Heart right ventricle (tissue), 16 donors: ENCODE measurements at regions of chr6 and their contacts with region 1.

Region 1: GRCh38 chr6:121771937-121772720 is 336.7 kb downstream of the GJA1 start:
- DNase-seq: no peak
- ATAC-seq: peak in 2 of 8 donors; percentile 41 to 63
- H3K4me3 ChIP-seq: no peak overlapping the region
- H3K27ac ChIP-seq: peak overlapping the region in 3 of 10 donors; percentile 36 to 73 (median 63)
- H3K4me1 ChIP-seq: peaks cover 0 to 32% (median 4%) of the 10 kb centered on the region in 9 donors
- H3K27me3 ChIP-seq: no peaks in the 10 kb centered on the region
- CTCF ChIP-seq: no peak

Region 2: GRCh38 chr6:121436960-121437850 is 334.9 kb before region 1 on chr6:
- intact Hi-C with region 1: loop called in 1 of 10 experiments (anchors 5 kb)
- DNase-seq: peak; percentile 50 to 53
- ATAC-seq: peak; percentile 56 to 72 (median 64)
- H3K4me3 ChIP-seq: peak overlapping the region; percentile 54 to 82 (median 72)
- H3K27ac ChIP-seq: peak overlapping the region; percentile 83 to 96 (median 90)
- H3K4me1 ChIP-seq: peaks cover 0 to 41% (median 18%) of the 10 kb centered on the region in 9 donors
- H3K27me3 ChIP-seq: peaks cover 0 to 35% (median 0%) of the 10 kb centered on the region in 7 donors
- CTCF ChIP-seq: no peak

Region 3: DNA sequence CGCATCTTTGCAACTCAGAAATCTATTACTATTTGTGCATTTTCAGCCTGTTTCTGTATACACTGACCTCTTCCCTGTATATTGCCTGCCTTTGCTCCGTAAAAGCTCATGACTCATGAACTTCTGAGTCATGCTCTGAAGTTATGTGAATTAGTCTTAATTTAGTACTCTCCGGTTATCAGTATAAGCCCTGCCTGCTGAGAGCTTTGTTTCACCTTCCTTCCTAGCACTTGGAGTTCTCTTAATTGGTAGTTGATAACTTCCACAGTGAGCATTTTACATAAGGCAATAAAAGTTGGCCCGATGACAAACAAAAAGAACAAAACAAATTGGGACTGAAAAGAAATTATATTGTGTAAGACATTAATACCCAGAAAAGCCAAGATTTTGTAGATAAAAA is 105.3 kb before region 1 on chr6:
- intact Hi-C with region 1: loop called in 1 of 10 experiments (anchors 10 kb)
- DNase-seq: peak in 1 of 2 donors; percentile 21
- ATAC-seq: peak; percentile 77 to 98 (median 94)
- H3K4me3 ChIP-seq: no peak overlapping the region
- H3K27ac ChIP-seq: peak overlapping the region in 8 of 10 donors; percentile 41 to 77 (median 58)
- H3K4me1 ChIP-seq: peaks cover 0 to 20% (median 12%) of the 10 kb centered on the region in 9 donors
- H3K27me3 ChIP-seq: no peaks in the 10 kb centered on the region
- CTCF ChIP-seq: no peak

Region 4: GRCh38 chr6:121697921-121698320 is 74.2 kb before region 1 on chr6:
- intact Hi-C with region 1: no loop called
- DNase-seq: no peak
- ATAC-seq: no peak
- H3K4me3 ChIP-seq: no peak overlapping the region
- H3K27ac ChIP-seq: no peak overlapping the region
- H3K4me1 ChIP-seq: peaks cover 0 to 11% (median 0%) of the 10 kb centered on the region in 9 donors
- H3K27me3 ChIP-seq: no peaks in the 10 kb centered on the region
- CTCF ChIP-seq: no peak

Region 5: GRCh38 chr6:121711472-121711871 is 60.7 kb before region 1 on chr6:
- intact Hi-C with region 1: loop called in 1 of 10 experiments (anchors 5 kb)
- DNase-seq: peak in 1 of 2 donors; percentile 74
- ATAC-seq: peak; percentile 62 to 94 (median 87)
- H3K4me3 ChIP-seq: no peak overlapping the region
- H3K27ac ChIP-seq: peak overlapping the region in 5 of 10 donors; percentile 23 to 63 (median 37)
- H3K4me1 ChIP-seq: peaks cover 0 to 17% (median 0%) of the 10 kb centered on the region in 9 donors
- H3K27me3 ChIP-seq: no peaks in the 10 kb centered on the region
- CTCF ChIP-seq: no peak

Region 6: GRCh38 chr6:121826156-121826810 is 54.2 kb after region 1 on chr6:
- intact Hi-C with region 1: loop called in 1 of 10 experiments (anchors 5 kb)
- DNase-seq: no peak
- ATAC-seq: peak in 5 of 8 donors; percentile 59 to 81 (median 74)
- H3K4me3 ChIP-seq: no peak overlapping the region
- H3K27ac ChIP-seq: peak overlapping the region in 3 of 10 donors; percentile 18 to 51 (median 45)
- H3K4me1 ChIP-seq: peaks cover 0 to 32% (median 20%) of the 10 kb centered on the region in 9 donors
- H3K27me3 ChIP-seq: no peaks in the 10 kb centered on the region
- CTCF ChIP-seq: no peak